Right cardiac atrium (tissue), 5 donors: ENCODE measurements at regions of chr19 and their contacts with region 1.

Region 1: DNA sequence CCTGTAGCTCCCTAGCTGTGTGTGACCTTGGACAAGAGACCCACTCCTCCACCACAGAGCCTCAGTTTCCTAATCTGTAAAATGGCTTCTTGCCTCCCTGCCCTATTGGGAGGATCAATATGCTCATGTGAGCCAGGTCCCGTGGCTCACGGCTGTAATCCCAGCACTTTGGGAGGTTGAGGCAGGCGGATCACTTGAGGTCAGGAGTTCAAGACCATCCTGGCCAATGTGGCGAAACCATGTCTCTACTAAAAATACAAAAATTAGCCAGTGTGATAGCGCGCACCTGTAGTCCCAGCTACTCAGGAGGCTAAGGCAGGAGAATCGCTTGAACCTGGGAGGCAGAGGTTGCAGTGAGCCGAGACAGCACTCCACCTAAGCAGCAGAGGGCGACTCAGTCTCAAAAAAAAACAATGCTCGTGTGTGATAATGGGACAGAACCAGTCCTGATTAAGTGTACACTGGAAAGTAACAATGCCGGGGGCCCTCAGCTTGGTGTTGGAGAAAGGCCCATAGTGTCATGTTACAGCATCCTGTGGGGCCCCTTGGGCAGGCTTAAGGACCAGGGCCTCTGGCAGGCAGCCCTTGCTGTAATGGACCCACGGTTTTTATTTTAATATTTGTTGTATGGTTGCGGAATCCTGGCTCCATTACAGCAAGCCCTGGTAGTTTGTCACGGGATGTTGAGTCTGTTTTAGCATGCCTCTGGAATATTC is 6.8 kb downstream of the RPS11 start:
- DNase-seq: peak in 1 of 3 donors; percentile 70
- ATAC-seq: peak; percentile 58 to 59
- H3K4me3 ChIP-seq: no peak overlapping the region
- H3K27ac ChIP-seq: no peak overlapping the region
- H3K4me1 ChIP-seq: peaks cover 5% of the 10 kb centered on the region
- H3K27me3 ChIP-seq: no peaks in the 10 kb centered on the region

Region 2: DNA sequence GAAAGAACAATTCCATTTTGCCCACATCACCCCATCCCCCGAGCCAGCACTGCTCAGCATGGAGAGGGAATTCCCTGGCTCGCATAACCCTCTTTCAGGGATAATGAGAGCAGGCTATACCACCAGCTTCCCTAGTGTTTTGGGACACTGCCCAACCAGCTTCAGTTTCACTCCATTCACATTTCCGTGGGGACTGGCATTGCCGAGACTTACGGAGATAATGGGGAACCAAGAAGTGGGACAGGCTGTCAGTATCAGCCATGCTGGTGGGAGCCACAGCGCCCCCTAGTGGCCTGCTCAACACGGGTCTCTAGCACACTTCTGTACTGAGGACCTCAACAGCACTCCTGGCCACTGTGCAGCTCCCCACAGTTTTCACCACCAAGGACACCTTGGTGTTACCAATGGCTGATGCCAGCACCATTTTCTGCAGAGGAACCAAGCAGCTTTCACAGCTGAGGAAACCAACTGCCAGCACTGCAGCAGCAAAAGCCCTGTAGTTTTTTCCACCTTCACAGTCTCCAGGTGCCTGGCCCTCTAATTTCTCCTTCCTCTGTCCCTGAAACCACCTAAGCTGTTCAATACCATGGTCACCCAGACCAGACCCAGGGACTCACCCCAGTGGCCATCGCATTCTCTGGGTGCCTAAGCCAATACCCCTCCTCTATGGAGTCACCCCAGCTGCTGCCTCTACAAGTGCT is 201.7 kb before region 1 on chr19:
- intact Hi-C with region 1: no loop called
- DNase-seq: peak; percentile 81 to 92 (median 91)
- ATAC-seq: peak; percentile 93 to 94
- H3K4me3 ChIP-seq: peak overlapping the region; percentile 25
- H3K27ac ChIP-seq: no peak overlapping the region
- H3K4me1 ChIP-seq: no peaks in the 10 kb centered on the region
- H3K27me3 ChIP-seq: no peaks in the 10 kb centered on the region

Region 3: DNA sequence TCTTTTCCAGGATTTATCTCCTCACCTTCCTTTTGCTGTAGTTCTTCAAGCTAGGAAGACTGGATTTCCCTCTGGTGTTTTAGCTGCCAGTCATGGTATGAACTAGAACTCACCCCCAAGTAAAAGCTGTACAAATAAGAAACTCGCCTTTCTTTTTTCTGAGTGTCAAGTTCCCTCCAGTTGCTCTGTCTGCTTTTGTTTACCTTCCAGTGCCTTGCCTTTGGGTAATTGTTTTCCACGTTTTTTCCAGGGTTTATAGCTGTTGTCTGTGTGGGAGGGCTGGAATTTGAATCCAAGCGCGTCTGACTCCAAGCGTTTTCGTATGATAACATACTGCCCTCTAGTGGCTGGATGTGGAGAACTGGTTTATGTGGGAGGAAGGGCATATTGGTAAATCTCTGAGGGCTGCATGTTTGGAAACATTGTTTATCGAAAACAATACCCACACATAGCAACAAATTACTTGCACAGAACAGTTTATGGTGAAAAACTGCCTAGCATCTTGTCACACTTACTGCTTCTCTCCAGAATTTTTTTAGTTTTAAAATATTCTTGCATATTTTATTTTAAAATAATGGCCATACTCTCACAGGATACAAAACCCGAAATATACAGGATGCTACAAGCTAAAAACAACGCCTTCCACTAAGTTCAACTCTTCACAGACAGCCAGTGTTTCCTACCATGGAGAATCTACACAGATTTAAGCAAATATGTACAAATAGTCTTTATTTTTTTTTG is 44.0 kb after region 1 on chr19:
- intact Hi-C with region 1: loop called in 3 of 4 experiments (anchors 2 to 5 kb)
- DNase-seq: peak in 1 of 3 donors; percentile 76
- ATAC-seq: peak; percentile 77 to 84
- H3K4me3 ChIP-seq: no peak overlapping the region
- H3K27ac ChIP-seq: no peak overlapping the region
- H3K4me1 ChIP-seq: no peaks in the 10 kb centered on the region
- H3K27me3 ChIP-seq: no peaks in the 10 kb centered on the region

Region 4: DNA sequence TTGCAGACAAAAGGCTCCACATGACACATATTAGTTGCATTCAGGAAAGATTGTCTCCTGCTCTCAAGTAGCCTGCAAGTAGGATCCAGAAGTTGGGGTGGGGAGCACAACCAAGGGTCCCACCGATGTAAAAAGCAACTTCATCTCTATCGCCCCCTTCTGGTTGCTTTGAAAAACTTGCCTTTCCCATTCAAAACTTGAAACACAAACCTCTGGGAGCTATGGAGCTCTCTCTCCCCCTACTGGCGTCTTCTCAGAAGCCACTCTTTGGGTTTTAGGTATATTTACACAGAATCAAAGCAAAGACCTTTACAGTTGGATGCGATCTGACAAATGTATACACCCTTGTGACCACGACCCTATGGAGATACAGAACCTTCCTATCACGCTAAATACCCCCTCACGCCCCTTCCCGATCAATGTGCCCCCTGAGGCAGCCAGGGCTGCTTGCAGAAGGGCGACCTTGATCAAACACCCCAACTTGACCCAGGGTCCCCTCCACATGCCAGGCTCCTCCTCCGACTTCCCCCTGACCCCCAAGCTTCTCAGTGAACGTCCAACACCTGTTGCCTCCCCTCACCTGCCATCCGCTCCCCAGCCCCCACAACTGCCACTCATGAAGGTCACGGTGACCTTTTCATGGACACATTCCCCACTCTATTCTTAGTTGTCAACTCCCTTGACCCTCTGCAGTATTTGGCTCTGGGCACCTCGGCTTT is 67.3 kb after region 1 on chr19:
- intact Hi-C with region 1: loop called in 1 of 4 experiments (anchors 2 kb)
- DNase-seq: peak in 2 of 3 donors; percentile 55 to 68
- ATAC-seq: peak; percentile 64 to 67
- H3K4me3 ChIP-seq: no peak overlapping the region
- H3K27ac ChIP-seq: peak overlapping the region; percentile 34
- H3K4me1 ChIP-seq: peaks cover 4% of the 10 kb centered on the region
- H3K27me3 ChIP-seq: no peaks in the 10 kb centered on the region

Region 5: GRCh38 chr19:49655570-49656455 is 152.8 kb after region 1 on chr19:
- intact Hi-C with region 1: loop called in 1 of 4 experiments (anchors 5 kb)
- DNase-seq: no peak
- ATAC-seq: no peak
- H3K4me3 ChIP-seq: no peak overlapping the region
- H3K27ac ChIP-seq: no peak overlapping the region
- H3K4me1 ChIP-seq: no peaks in the 10 kb centered on the region
- H3K27me3 ChIP-seq: no peaks in the 10 kb centered on the region